HEK293 (cell line): ENCODE measurements at regions of chr22 and their contacts with region 1.

Region 1: GRCh38 chr22:19143967-19144400 is 467 bp downstream of the ESS2 start:
- H3K4me3 ChIP-seq: peak overlapping the region; percentile 86
- H3K27ac ChIP-seq: peak overlapping the region; percentile 43; the same call in 1 of the 2 replicates
- H3K4me1 ChIP-seq: no peaks in the 10 kb centered on the region
- CTCF ChIP-seq: no peak

Region 2: DNA sequence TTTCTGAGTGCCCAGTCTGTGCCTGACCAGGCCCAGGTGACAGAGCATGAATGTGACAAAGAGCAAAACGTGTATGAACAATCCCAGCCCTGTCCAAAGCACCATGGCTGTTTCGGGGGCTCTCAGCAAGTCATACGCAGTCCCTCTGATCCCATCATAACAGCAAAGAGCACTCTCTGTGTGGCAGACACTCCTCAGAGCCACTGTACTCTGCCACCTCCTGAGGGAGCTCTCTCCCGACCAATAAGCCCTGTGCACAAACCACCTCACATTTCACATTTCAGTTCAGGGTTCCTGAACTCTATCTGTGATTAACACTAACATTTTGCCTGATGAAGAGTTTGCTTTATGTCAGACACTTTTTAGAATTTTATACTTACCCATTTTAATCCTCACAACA is 28.4 kb before region 1 on chr22:
- CTCF ChIA-PET with region 1: interaction called, 10 read pairs
- POLR2A ChIA-PET with region 1: interaction called, 34 read pairs
- H3K4me3 ChIP-seq: no peak overlapping the region
- H3K27ac ChIP-seq: no peak overlapping the region
- H3K4me1 ChIP-seq: no peaks in the 10 kb centered on the region
- CTCF ChIP-seq: 0 out of 2 replicates have a peak, but pooled peaks have one; percentile 35

Region 3: GRCh38 chr22:19122143-19122751 is 21.7 kb before region 1 on chr22 and contains the start of gene DGCR2:
- CTCF ChIA-PET with region 1: interaction called, 3 read pairs
- POLR2A ChIA-PET with region 1: interaction called, 34 read pairs
- H3K4me3 ChIP-seq: peak within 1 kb of the TSS; percentile 94
- H3K27ac ChIP-seq: peak within 1 kb of the TSS; percentile 75
- H3K4me1 ChIP-seq: no peaks in the 10 kb centered on the region
- CTCF ChIP-seq: no peak

Region 4: GRCh38 chr22:19129871-19130270 is 14.1 kb before region 1 on chr22:
- CTCF ChIA-PET with region 1: interaction called, 12 read pairs
- POLR2A ChIA-PET with region 1: interaction called, 26 read pairs
- H3K4me3 ChIP-seq: no peak overlapping the region
- H3K27ac ChIP-seq: no peak overlapping the region
- H3K4me1 ChIP-seq: no peaks in the 10 kb centered on the region
- CTCF ChIP-seq: no peak